ENCODE measurements at regions of chr6 and their contacts with region 1.

Region 1: GRCh38 chr6:154156135-154156896 is 117.3 kb downstream of the OPRM1 start:
- DNase-seq: no peak
- ATAC-seq: peak; percentile 60

Region 2: DNA sequence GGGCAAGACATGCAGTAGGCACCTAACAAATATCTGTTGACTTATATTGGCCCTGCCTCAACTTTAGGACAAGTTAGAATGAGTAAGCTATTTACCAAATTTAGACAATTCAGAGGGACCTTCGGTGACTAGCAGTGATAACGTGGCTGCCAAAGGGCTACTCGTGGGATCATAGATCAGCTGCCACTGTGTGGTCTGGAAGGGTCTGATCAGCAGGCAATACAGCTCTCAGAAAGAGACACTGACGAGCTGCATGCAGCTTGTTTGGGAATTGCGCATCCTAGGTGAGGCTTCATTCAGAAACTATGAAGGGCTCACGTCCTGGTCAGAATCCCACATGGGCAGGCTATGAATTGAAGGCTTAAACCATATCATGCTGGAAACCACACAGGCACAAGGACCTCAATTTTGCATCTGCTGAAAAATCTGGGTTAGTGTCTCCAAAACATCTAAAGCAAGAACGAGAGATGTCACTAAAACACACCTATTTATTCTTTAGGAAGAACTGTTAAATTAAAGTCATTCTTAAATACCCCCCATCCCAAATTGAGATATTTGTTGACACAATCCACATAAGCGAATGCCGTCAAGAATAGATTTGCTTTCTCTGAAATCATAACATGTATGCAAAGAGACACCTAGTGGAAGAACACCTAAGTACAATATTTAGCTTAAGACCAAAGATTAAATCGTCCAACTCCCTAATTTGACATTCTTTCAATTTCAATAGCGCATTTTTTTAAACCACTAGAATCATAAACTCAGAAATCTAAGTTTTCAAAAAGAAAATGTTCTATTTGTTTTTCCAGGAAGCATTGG is 120.7 kb after region 1 on chr6:
- intact Hi-C with region 1: loop called (anchors 1 kb)
- DNase-seq: no peak
- ATAC-seq: no peak

Region 3: GRCh38 chr6:154367839-154368695 is 211.8 kb after region 1 on chr6:
- intact Hi-C with region 1: loop called (anchors 2 kb)
- DNase-seq: no peak
- ATAC-seq: no peak

Region 4: DNA sequence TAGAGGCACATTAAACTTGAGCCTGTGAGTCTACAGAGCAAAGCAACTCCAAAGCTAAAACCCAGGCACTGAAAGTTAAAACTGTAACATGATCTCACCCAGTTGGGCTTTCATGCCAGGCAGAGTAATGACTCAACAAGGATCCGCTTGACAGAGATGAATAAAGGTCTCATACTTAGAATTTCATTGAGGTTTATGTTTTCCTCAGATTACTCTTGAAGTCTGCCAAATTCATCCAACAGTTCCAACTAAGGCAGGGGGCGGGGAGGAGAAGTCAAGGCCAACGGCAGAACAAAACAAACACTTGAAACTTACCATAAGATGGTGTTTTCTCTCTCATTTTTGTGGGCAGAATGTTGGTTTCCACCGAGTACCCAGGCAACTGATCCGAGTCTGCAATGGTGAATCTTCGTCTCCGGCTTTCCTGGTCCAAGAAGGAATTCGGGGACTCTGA is 254.3 kb after region 1 on chr6:
- intact Hi-C with region 1: loop called (anchors 10 kb)
- DNase-seq: no peak
- ATAC-seq: peak; percentile 87

Region 5: DNA sequence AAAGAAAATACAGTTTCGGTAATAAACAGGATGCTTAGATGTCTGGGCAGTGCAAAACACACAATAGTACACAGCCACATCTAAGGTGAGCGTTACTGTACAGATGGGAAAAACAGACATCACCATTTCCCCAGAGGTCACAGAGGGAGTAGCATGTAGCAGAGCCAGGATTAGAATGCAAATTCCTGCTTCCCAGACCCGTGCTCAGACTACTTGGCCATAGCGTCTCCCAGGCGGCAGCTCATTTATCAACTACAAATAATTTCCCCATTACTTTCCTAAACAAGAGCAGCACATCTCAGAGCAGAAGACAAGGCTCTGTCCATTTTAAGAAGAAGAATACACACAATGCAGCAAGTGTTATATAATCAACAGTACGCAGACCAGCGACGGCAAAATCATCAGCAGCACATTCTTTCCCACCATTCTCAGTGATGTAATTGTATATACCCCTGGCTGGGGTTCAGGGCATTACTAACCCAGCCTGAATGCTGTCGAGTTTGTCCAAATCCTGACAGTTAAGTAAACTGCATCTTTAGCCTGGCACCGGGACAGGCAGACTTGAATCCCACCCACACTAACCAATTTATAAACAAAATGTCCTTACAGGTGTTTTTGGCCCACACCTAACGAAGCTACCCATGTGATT is 292.3 kb after region 1 on chr6:
- intact Hi-C with region 1: no loop called
- DNase-seq: no peak
- ATAC-seq: peak; percentile 88

Region 6: DNA sequence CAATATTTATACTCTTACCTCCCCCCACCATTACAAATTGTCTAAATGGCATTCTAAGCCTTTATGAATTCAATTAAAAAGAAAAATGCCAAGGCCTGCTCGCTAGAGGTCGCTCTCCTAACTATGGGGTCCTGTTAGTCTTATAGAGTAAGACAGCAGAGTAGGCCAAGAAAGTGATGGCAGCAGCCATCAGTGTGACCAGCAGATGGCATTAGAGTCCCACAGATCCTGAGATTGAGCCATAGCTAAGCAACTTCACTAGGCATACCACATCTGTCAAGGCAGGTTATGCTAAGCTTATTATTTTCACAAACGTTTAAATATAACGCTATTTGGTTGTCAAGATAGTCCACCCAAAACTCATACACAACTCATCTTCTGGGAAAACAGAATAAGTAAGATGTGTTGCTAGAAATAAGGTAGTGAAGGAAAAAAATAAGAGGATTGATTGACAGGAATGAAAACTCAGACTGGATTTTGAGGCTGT is 519.3 kb after region 1 on chr6:
- intact Hi-C with region 1: loop called (anchors 10 kb)
- DNase-seq: peak; percentile 84
- ATAC-seq: peak; percentile 99

Measured in Right ventricle myocardium inferior (tissue), 1 donor.